Right ventricle myocardium inferior (tissue), 1 donor: ENCODE measurements at regions of chr6 and their contacts with region 1.

Region 1: GRCh38 chr6:105484238-105485161 is 81.6 kb upstream of the PREP start:
- DNase-seq: no peak
- ATAC-seq: no peak

Region 2: GRCh38 chr6:105326833-105327770 is 157.4 kb before region 1 on chr6:
- intact Hi-C with region 1: no loop called
- DNase-seq: no peak
- ATAC-seq: no peak

Region 3: GRCh38 chr6:105608711-105609374 is 124.3 kb after region 1 on chr6:
- intact Hi-C with region 1: loop called (anchors 5 kb)
- DNase-seq: no peak
- ATAC-seq: no peak

Region 4: GRCh38 chr6:105675715-105676397 is 191.4 kb after region 1 on chr6:
- intact Hi-C with region 1: no loop called
- DNase-seq: no peak
- ATAC-seq: no peak

Region 5: GRCh38 chr6:105739764-105740163 is 255.3 kb after region 1 on chr6:
- intact Hi-C with region 1: loop called (anchors 5 kb)
- DNase-seq: no peak
- ATAC-seq: no peak

Region 6: DNA sequence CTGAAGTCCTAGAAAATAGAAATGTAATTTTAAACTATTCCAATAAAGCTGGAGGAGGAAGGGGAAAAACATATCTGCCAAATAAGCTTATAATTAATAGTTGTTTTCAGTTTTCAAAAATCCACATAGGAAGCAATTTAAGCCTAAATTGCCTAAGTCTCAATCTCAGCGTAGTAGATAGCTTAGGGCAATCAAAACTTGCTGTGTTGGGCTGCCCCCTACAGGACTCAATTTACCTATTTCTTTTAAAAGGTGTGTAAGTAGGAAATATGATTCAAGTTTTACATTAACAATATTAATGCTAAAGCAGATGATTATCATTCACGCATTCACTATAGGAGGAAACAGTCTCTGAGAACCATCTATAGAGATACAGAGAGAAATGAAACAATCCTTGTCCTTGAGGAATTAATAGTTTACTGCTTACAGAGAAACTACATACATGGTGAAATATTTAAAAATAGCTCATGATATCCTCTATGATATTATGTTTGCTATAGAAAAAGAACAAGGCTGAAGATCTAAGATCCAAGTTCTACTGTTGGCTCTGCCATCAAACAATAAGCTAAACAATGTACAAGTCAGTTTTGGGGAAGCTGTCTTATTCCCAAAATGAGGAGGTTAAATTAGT is 738.9 kb after region 1 on chr6:
- intact Hi-C with region 1: loop called (anchors 5 kb)
- DNase-seq: no peak
- ATAC-seq: no peak

Region 7: GRCh38 chr6:106300944-106301343 is 816.4 kb after region 1 on chr6:
- intact Hi-C with region 1: loop called (anchors 10 kb)
- DNase-seq: no peak
- ATAC-seq: no peak